CD14-positive monocyte (primary cell): ENCODE measurements at regions of chr12 and their contacts with region 1.

Region 1: DNA sequence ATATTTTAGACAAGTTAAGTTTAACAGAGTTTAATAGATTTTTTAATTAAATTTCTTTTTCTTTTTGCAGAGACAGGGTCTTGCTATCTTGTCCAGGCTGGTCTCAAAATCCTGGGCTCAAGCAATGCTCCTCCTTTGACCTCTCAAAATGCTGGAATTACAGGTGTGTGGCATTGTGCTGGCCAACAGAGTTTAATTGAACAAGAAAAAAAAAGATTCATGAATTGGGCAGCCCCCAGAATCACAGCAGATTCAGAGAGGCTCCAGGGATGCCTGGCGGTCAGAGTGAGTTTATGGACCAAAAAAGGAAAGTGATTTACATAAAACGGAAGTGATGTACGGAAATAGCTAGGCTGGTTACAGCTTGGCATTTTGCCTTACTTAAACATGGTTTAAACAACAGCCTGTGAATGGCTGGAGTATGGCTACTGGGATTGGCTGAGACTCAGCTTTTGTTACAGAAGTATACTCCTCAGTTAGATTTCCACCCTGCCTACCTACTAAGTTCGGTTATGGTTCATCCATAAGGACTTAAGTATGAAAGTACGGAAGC is 14.5 kb upstream of the TESPA1 start:
- DNase-seq: peak; percentile 21 to 63 (median 39)
- H3K4me3 ChIP-seq: no peak overlapping the region
- H3K4me3 Mint-ChIP-seq: no peak overlapping the region
- H3K27ac ChIP-seq: no peak overlapping the region
- H3K27ac Mint-ChIP-seq: no peak overlapping the region
- H3K4me1 ChIP-seq: peaks cover 8 to 9% of the 10 kb centered on the region in 2 donors
- H3K4me1 Mint-ChIP-seq: peaks cover 17% of the 10 kb centered on the region
- H3K27me3 ChIP-seq: no peaks in the 10 kb centered on the region
- H3K27me3 Mint-ChIP-seq: peaks cover 0 to 7% (median 4%) of the 10 kb centered on the region in 3 donors
- CTCF ChIP-seq: no peak

Region 2: DNA sequence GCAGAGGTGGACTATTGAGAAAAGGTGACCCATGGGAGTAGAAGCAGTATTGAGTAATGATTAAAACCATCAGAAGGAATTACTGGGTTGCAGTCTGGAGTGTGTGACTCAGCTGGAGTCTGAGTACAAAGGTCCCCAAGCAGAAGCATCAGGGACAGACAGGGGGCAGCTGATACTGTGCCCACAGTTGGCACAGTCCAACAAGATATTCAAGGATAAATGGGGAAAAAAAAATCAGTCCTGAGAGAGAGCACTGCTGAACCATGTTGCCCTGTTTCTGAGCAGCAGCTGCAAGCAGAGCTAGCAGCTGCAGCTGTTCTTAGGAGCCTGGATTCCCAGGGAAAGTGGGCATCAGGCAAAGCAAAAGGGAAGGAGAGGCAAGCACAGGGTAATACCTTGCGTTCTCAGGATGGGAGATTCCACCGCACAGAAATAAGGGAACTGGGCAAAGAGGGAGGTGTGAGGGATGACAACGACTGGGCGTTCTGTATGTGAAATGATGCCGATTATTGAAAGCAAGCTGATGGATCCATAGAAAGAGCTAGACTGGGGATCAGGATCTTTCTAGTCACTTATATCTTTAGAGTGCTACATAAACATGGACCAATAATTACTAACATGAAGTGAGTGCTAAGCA is 38.4 kb after region 1 on chr12:
- intact Hi-C with region 1: loop called in 1 of 2 experiments (anchors 5 kb)
- DNase-seq: peak in 2 of 3 donors; percentile 39 to 54
- H3K4me3 ChIP-seq: peak overlapping the region in 1 of 3 experiments; percentile 47
- H3K4me3 Mint-ChIP-seq: peak overlapping the region in 1 of 2 donors; percentile 56
- H3K27ac ChIP-seq: peak overlapping the region in 1 of 2 donors; percentile 59
- H3K27ac Mint-ChIP-seq: peak overlapping the region; percentile 8 to 85 (median 77)
- H3K4me1 ChIP-seq: peaks cover 47 to 67% of the 10 kb centered on the region in 2 donors
- H3K4me1 Mint-ChIP-seq: peaks cover 67% of the 10 kb centered on the region
- H3K27me3 ChIP-seq: no peaks in the 10 kb centered on the region
- H3K27me3 Mint-ChIP-seq: no peaks in the 10 kb centered on the region
- CTCF ChIP-seq: no peak

Region 3: DNA sequence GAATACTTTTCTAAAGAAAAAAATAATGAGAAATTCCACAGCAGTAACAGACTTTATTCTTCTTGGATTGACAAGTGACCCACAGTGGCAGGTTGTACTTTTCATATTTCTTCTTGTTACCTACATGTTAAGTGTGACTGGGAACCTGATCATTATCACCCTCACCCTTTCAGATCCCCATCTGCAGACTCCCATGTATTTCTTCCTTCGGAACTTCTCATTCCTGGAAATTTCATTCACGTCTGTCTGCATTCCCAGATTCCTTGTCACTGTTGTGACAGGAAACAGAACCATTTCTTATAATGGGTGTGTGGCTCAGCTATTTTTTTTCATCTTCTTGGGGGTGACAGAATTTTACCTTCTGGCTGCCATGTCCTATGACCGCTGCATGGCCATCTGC is 366.1 kb after region 1 on chr12:
- intact Hi-C with region 1: no loop called
- DNase-seq: no peak
- H3K4me3 ChIP-seq: no peak overlapping the region
- H3K4me3 Mint-ChIP-seq: no peak overlapping the region
- H3K27ac ChIP-seq: no peak overlapping the region
- H3K27ac Mint-ChIP-seq: no peak overlapping the region
- H3K4me1 ChIP-seq: no peaks in the 10 kb centered on the region
- H3K4me1 Mint-ChIP-seq: no peaks in the 10 kb centered on the region
- H3K27me3 ChIP-seq: peaks cover 0 to 3% of the 10 kb centered on the region in 2 donors
- H3K27me3 Mint-ChIP-seq: peaks cover 3 to 12% (median 4%) of the 10 kb centered on the region in 3 donors
- CTCF ChIP-seq: no peak